GM10248 (cell line): ENCODE measurements at regions of chr2 and their contacts with region 1.

Region 1: DNA sequence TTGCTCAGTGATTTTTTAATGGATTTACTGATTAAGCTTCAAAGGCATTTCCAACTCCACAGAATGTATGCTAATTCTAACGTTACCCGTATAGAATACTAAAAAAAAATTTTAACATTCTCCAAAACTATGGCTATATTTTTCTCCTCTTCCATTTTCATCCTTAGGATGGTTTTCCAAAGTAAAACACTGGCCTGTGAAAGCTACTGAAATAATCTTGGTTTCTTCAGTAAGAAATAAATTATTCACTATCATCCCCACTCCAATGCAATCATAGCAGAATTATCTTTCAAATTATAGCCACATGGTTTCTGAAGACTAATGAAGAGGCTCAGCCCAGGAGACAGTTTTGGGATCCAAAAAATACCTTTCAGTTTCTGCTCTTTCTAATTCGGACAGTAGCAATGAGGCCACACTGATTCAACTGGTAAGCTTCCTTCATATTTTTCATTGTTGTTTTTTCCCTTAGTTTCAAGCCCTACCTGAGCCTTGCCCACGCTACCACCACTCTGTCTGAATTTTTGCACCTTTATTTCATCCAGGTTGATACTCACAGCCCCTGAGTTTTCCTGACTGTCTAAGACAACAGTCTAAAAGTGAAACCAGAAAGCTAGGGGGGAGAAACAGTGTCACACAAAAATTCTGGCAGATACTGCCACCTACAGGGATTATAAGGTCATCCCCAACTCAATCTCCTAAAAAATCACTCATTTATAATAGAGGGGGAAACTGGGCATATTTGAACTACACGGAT is 887.9 kb downstream of the NRXN1 start:
- DNase-seq: peak; percentile 26
- CTCF ChIP-seq: peak; percentile 57

Region 2: GRCh38 chr2:49616800-49617199 is 527.2 kb before region 1 on chr2:
- CTCF ChIA-PET with region 1: interaction called, 12 read pairs
- POLR2A ChIA-PET with region 1: no interaction called
- DNase-seq: peak; percentile 12
- CTCF ChIP-seq: peak; percentile 17

Region 3: GRCh38 chr2:49770919-49771318 is 373.1 kb before region 1 on chr2:
- CTCF ChIA-PET with region 1: interaction called, 25 read pairs
- POLR2A ChIA-PET with region 1: no interaction called
- DNase-seq: peak; percentile 15
- CTCF ChIP-seq: peak; percentile 44